Right ventricle myocardium superior (tissue), 1 donor: ENCODE measurements at regions of chr20 and their contacts with region 1.

Region 1: GRCh38 chr20:32779500-32780211 is 17.5 kb downstream of the DNMT3B start:
- DNase-seq: no peak
- ATAC-seq: no peak

Region 2: GRCh38 chr20:32674362-32674789 is 105.3 kb before region 1 on chr20:
- intact Hi-C with region 1: loop called (anchors 5 kb)
- DNase-seq: no peak
- ATAC-seq: no peak